Heart right ventricle (tissue), 16 donors: ENCODE measurements at regions of chr22 and their contacts with region 1.

Region 1: DNA sequence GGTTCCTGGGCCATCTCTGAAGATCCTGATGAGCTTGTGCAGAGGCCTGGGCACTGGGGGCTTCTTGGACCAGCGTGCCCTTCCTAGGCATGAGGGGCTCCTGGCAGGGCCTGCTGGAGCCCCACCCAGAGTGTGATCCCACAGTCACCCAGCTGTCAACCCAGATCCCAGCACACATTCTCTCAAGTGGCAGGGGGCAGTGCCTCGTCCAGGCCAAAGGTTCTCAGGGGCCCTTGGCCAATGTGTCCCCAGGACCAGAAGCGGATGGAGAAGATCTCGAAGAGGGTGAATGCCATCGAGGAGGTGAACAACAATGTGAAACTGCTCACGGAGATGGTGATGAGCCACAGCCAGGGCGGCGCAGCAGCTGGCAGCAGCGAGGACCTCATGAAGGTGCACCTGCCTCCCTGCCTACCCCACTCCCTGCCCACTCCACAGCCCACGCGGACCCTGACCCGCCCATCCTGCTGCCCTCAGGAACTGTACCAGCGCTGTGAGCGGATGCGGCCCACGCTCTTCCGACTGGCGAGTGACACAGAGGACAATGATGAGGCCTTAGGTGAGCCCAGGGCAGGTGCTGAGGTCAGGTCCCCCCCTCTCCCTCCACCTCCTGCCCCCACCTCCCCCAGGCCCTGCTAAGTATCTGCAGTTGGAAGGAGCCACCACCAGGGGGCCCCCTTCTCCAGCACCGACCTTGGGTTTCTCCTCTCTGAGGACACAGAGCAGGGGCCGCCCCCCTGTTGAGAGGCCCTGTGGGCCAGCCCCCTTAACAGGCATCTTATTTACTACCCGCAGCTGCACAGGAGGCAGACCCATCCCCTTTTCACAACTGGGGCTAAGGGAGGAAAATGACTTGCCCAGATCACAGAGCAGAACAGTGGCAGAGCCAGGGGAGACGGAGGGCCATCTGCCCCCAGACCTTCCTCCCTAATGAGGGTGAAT is 14.7 kb downstream of the GGA1 start:
- DNase-seq: peak; percentile 60 to 72
- ATAC-seq: peak; percentile 45 to 66 (median 60)
- H3K4me3 ChIP-seq: no peak overlapping the region
- H3K27ac ChIP-seq: peak overlapping the region in 5 of 10 donors; percentile 6 to 58 (median 26)
- H3K4me1 ChIP-seq: peaks cover 15 to 36% (median 29%) of the 10 kb centered on the region in 9 donors
- H3K27me3 ChIP-seq: no peaks in the 10 kb centered on the region
- CTCF ChIP-seq: peak; percentile 80 to 90 (median 88)

Region 2: GRCh38 chr22:37862570-37863325 is 239.4 kb after region 1 on chr22:
- intact Hi-C with region 1: loop called in 1 of 10 experiments (anchors 10 kb)
- DNase-seq: no peak
- ATAC-seq: peak in 7 of 8 donors; percentile 13 to 52 (median 37)
- H3K4me3 ChIP-seq: no peak overlapping the region
- H3K27ac ChIP-seq: peak overlapping the region in 8 of 10 donors; percentile 1 to 49 (median 37)
- H3K4me1 ChIP-seq: peaks cover 0 to 41% (median 17%) of the 10 kb centered on the region in 9 donors
- H3K27me3 ChIP-seq: no peaks in the 10 kb centered on the region
- CTCF ChIP-seq: no peak